Right ventricle myocardium inferior (tissue), 1 donor: ENCODE measurements at regions of chr1 and their contacts with region 1.

Region 1: DNA sequence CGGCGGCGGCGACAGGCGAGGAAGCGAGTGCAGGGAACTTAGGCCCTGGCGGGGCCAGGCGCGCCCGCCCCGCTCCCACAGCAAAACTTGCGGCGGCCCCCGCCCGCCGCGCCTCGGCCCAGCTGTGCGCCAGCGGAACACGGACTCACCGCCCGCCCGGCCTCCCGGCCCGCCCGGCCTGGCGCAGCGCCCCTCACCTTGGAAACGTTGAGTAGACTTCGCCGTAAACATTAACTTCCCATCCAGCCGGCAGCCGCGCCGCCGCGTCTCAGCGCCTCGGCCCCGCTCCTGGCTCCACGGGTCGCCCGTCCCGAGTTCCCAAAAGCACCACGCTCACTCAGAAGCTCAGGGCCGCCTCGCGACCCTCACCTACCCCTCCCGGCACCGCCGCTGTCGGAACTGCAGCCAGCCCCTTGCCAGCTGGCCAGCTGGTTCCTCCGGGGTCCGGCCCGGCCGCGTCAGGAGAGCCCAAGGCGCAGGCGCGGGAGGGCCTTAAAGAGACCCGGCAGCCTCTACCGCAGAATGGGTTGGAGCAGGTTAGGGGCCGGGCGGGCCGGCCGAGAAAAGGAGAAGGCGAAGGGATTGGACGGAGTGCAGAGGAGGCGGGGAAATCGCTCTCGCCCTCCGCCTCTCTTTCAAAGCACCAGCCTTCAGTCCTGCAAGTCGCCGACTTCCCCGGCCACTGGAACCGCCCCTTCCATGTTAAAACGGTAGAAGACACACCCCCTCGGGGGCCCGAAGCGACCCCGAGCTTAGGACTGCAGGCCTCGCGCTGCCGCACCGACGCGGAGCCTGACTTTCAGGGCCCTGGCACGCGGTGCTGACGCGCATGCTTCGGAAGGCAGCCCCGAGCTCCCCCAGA is at the start of gene EVI5:
- DNase-seq: peak; percentile 98
- ATAC-seq: peak; percentile 99
- total RNA-seq, gene EVI5: 20.0 TPM

Region 2: GRCh38 chr1:92755541-92756461 is 29.1 kb before region 1 on chr1:
- intact Hi-C with region 1: loop called (anchors 2 kb)
- DNase-seq: peak; percentile 84
- ATAC-seq: peak; percentile 87